ENCODE measurements at regions of chr1 and their contacts with region 1.

Region 1: GRCh38 chr1:32933742-32934322 is 30.8 kb downstream of the RNF19B start:
- DNase-seq: no peak
- H3K4me3 ChIP-seq: no peak overlapping the region
- H3K27ac ChIP-seq: peak overlapping the region; percentile 11 to 27
- H3K4me1 ChIP-seq: peaks cover 0 to 6% (median 0%) of the 10 kb centered on the region in 4 donors
- H3K27me3 ChIP-seq: no peaks in the 10 kb centered on the region
- CTCF ChIP-seq: no peak

Region 2: GRCh38 chr1:32953495-32953894 is 19.7 kb after region 1 on chr1:
- intact Hi-C with region 1: no loop called
- DNase-seq: no peak
- H3K4me3 ChIP-seq: no peak overlapping the region
- H3K27ac ChIP-seq: no peak overlapping the region
- H3K4me1 ChIP-seq: peaks cover 0 to 42% (median 20%) of the 10 kb centered on the region in 4 donors
- H3K27me3 ChIP-seq: no peaks in the 10 kb centered on the region
- CTCF ChIP-seq: no peak

Region 3: GRCh38 chr1:33007190-33008050 is 73.6 kb after region 1 on chr1:
- intact Hi-C with region 1: loop called (anchors 5 kb)
- DNase-seq: peak; percentile 67 to 73
- H3K4me3 ChIP-seq: no peak overlapping the region
- H3K27ac ChIP-seq: no peak overlapping the region
- H3K4me1 ChIP-seq: peaks cover 0 to 24% (median 19%) of the 10 kb centered on the region in 4 donors
- H3K27me3 ChIP-seq: no peaks in the 10 kb centered on the region
- CTCF ChIP-seq: peak; percentile 24 to 47

Region 4: GRCh38 chr1:33055210-33056008 is 121.6 kb after region 1 on chr1:
- intact Hi-C with region 1: loop called (anchors 5 kb)
- DNase-seq: peak; percentile 53 to 70
- H3K4me3 ChIP-seq: no peak overlapping the region
- H3K27ac ChIP-seq: no peak overlapping the region
- H3K4me1 ChIP-seq: peaks cover 0 to 10% (median 2%) of the 10 kb centered on the region in 4 donors
- H3K27me3 ChIP-seq: no peaks in the 10 kb centered on the region
- CTCF ChIP-seq: peak; percentile 66 to 70

Measured in tibial artery (tissue), 4 donors.